Right cardiac atrium (tissue), 5 donors: ENCODE measurements at regions of chr21 and their contacts with region 1.

Region 1: DNA sequence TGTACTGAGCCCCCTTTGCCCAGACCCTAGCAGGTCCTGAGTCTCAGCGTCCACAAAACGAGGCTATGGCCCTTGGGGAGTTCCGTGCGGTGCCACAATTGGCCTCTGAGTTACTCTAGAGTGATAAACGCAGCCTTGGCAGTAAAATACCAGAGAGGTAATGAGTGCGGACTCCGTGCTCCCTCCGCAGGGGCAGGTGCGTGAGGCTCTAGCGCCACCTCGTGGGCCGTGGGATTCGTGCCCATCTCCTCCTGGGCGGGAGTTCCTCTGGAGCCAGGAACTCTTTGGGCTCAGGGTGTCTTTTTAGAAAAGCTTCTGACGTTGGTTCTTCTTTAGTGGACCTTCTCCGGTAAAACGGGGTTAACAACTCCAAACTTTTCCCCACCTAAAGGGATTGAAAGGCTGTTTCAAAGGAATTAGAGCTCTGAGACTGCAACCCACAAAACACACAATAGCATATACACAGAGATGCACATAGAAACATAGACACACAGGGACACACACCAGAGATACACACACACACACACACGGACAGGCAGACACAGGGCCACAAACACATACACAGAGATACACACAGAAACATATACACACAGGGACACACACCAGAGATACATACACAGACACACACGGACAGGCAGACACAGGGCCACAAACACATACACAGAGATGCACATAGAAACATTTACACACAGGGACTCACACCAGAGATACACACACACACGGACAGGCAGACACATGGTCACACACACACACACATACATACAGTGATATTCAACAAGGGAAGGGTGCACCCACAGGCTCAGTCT is 99.4 kb downstream of the KCNJ15 start:
- DNase-seq: peak; percentile 75 to 92 (median 91)
- ATAC-seq: peak; percentile 81 to 87
- H3K4me3 ChIP-seq: no peak overlapping the region
- H3K27ac ChIP-seq: no peak overlapping the region
- H3K4me1 ChIP-seq: no peaks in the 10 kb centered on the region
- H3K27me3 ChIP-seq: no peaks in the 10 kb centered on the region

Region 2: DNA sequence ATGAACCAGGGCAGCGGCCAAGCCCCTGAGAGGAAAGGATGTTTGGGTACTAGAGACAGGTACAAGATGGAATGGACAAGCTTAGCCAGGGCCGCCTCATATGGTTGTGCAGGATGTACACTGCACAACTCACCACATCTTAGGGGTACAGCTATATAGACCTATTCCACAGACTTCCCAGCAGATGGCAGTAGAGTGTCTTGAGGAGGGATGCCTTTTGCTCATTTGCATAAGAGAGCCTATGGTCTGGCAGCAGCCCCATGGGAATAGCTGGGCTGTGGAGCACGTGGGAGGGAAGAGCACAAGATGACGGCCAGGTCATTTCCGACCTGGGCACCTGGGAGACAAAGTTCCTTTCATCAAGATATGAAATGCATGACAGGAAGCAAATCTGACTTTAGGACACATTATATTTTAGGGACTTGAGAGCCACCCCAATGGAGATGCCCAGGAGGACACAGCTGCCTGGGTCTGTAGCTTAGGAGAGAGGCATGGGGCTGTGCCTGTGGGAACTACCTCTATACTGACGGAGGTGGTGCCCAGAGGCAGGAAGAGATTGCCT is 655.5 kb before region 1 on chr21:
- intact Hi-C with region 1: loop called in 3 of 4 experiments (anchors 10 kb)
- DNase-seq: peak in 1 of 3 donors; percentile 36
- ATAC-seq: peak; percentile 75 to 84
- H3K4me3 ChIP-seq: no peak overlapping the region
- H3K27ac ChIP-seq: no peak overlapping the region
- H3K4me1 ChIP-seq: no peaks in the 10 kb centered on the region
- H3K27me3 ChIP-seq: no peaks in the 10 kb centered on the region

Region 3: DNA sequence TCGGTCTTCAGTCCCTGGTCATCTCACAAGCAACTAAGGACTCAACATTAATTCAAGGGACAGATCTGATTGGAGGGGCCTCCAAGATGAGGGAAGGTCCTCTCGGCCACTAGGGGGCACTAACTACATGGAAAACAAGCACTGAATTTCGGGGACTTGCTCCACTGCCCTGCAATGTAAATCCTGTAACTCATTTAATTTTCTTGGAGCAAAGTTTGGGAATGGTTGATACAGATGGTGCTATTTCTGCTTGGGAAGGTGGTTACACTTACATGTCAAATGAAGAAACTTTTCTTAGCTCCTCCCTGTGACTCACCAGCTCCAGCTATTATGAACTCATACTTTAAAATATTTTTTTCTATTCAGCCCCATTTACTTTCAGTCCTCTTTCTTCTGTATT is 196.8 kb before region 1 on chr21:
- intact Hi-C with region 1: loop called in 3 of 4 experiments (anchors 2 to 5 kb)
- DNase-seq: peak; percentile 47 to 77 (median 54)
- ATAC-seq: peak; percentile 61 to 74
- H3K4me3 ChIP-seq: no peak overlapping the region
- H3K27ac ChIP-seq: no peak overlapping the region
- H3K4me1 ChIP-seq: no peaks in the 10 kb centered on the region
- H3K27me3 ChIP-seq: no peaks in the 10 kb centered on the region

Region 4: DNA sequence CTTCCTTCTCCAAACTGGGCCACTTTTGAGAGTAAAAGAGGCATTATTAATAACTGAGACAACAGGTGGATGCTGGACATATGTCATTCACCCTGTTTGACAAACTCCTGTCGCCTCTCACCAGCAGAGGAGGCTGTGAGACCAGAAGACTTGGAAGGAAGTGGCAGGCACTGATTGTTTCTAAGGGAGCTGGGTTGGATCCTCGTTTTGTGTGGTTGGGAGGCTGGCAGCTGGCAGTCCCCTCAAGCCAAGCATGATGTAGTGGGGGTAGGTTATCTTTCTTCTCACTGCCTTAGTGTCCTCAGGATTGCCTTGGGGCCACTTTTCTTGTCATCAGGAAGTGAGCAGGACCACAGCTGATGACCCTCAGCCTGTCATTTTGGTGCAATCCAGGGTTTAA is 185.9 kb before region 1 on chr21:
- intact Hi-C with region 1: loop called in 1 of 4 experiments (anchors 5 kb)
- DNase-seq: peak in 2 of 3 donors; percentile 20 to 40
- ATAC-seq: peak in 1 of 2 donors; percentile 30
- H3K4me3 ChIP-seq: no peak overlapping the region
- H3K27ac ChIP-seq: no peak overlapping the region
- H3K4me1 ChIP-seq: peaks cover 6% of the 10 kb centered on the region
- H3K27me3 ChIP-seq: no peaks in the 10 kb centered on the region

Region 5: GRCh38 chr21:38219049-38219628 is 137.1 kb before region 1 on chr21:
- intact Hi-C with region 1: loop called (anchors 2 to 5 kb)
- DNase-seq: peak; percentile 65 to 77 (median 77)
- ATAC-seq: peak; percentile 86 to 91
- H3K4me3 ChIP-seq: no peak overlapping the region
- H3K27ac ChIP-seq: no peak overlapping the region
- H3K4me1 ChIP-seq: no peaks in the 10 kb centered on the region
- H3K27me3 ChIP-seq: no peaks in the 10 kb centered on the region